Activated CD8-positive, alpha-beta T cell treated with anti-CD3 and anti-CD28 coated beads, Interleukin-2, amount 10 ng/mL, durations not matched to agents 7 days and 5 days (primary cell): ENCODE measurements at regions of chr5 and their contacts with region 1.

Region 1: GRCh38 chr5:53069626-53070025 is 39.9 kb downstream of the MOCS2 start:
- DNase-seq: peak; percentile 82
- ATAC-seq: peak; percentile 94
- H3K4me3 Mint-ChIP-seq: peak overlapping the region; percentile 44
- H3K27ac Mint-ChIP-seq: peak overlapping the region; percentile 80
- H3K4me1 Mint-ChIP-seq: peaks cover 30% of the 10 kb centered on the region
- H3K27me3 Mint-ChIP-seq: peaks cover 5% of the 10 kb centered on the region

Region 2: GRCh38 chr5:52757991-52758390 is 311.6 kb before region 1 on chr5:
- CTCF ChIA-PET with region 1: no interaction called
- POLR2A ChIA-PET with region 1: no interaction called
- DNase-seq: no peak
- ATAC-seq: no peak
- H3K4me3 Mint-ChIP-seq: no peak overlapping the region
- H3K27ac Mint-ChIP-seq: no peak overlapping the region
- H3K4me1 Mint-ChIP-seq: peaks cover 7% of the 10 kb centered on the region
- H3K27me3 Mint-ChIP-seq: no peaks in the 10 kb centered on the region

Region 3: GRCh38 chr5:52943285-52943684 is 126.3 kb before region 1 on chr5:
- CTCF ChIA-PET with region 1: interaction called, 10 read pairs
- POLR2A ChIA-PET with region 1: no interaction called
- DNase-seq: no peak
- ATAC-seq: peak; percentile 52
- H3K4me3 Mint-ChIP-seq: no peak overlapping the region
- H3K27ac Mint-ChIP-seq: peak overlapping the region; percentile 19
- H3K4me1 Mint-ChIP-seq: peaks cover 22% of the 10 kb centered on the region
- H3K27me3 Mint-ChIP-seq: no peaks in the 10 kb centered on the region

Region 4: DNA sequence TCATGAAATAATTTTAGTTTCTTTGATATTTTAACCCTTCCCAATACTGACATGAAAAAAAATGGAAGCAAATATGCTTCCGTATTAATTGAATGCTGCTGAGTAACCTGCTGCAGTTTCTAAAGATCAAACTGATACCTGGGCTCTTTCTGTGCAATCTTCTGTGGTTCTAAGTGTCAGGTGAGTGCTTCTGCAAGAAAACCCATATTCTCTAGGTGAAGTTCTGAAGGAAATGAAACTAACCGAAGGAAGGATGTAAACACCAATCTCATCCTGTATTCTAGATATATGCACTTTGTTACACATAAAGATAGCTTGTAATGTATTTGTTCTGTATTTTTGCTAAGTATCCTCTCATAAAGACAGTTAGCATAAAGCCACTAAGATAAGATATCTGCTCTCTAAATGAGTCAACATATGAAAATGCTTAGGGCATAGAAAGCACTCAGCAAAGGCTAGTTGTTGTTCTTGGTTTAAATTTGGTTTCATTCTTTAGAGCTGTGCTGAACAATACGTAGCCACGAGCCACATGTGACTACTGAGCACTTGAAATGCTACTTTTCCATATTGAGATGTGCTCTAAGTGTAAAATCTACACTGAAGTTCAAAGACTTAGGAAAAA is 28.4 kb before region 1 on chr5:
- CTCF ChIA-PET with region 1: interaction called, 13 read pairs
- POLR2A ChIA-PET with region 1: interaction called, 3 read pairs
- DNase-seq: peak; percentile 59
- ATAC-seq: peak; percentile 95
- H3K4me3 Mint-ChIP-seq: peak overlapping the region; percentile 73
- H3K27ac Mint-ChIP-seq: peak overlapping the region; percentile 88
- H3K4me1 Mint-ChIP-seq: peaks cover 79% of the 10 kb centered on the region
- H3K27me3 Mint-ChIP-seq: peaks cover 5% of the 10 kb centered on the region

Region 5: DNA sequence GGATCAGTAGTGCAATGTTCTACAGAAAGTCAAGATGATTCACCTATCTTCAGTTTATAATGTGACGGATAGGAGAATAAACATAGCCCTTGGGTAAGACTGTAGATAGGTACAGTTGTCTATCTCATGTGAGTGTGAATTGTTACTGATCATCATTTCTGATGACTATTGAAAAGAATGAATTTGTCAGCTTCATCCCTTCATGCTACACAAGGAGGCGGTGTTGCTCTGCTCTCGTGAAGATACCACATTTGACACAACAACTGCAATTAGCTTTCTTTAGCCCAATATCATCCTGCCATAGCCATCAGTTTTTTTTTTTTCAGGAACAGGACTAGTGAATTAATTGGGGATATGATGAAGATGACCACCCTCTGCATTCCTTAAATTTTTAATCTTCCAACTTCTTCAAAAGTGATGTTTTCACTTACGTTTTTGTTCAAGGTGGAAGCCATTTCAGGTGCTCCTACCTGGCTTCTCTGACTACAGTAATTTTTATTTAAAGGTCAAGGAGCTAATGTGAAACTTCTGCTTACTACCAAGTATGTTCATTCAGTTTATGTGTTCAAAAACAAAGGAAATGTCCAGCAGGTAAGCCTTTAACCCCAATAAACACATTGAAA is 192.8 kb after region 1 on chr5:
- CTCF ChIA-PET with region 1: no interaction called
- POLR2A ChIA-PET with region 1: no interaction called
- DNase-seq: no peak
- ATAC-seq: no peak
- H3K4me3 Mint-ChIP-seq: no peak overlapping the region
- H3K27ac Mint-ChIP-seq: no peak overlapping the region
- H3K4me1 Mint-ChIP-seq: no peaks in the 10 kb centered on the region
- H3K27me3 Mint-ChIP-seq: no peaks in the 10 kb centered on the region